Heart right ventricle (tissue), 16 donors: ENCODE measurements at regions of chr4 and their contacts with region 1.

Region 1: DNA sequence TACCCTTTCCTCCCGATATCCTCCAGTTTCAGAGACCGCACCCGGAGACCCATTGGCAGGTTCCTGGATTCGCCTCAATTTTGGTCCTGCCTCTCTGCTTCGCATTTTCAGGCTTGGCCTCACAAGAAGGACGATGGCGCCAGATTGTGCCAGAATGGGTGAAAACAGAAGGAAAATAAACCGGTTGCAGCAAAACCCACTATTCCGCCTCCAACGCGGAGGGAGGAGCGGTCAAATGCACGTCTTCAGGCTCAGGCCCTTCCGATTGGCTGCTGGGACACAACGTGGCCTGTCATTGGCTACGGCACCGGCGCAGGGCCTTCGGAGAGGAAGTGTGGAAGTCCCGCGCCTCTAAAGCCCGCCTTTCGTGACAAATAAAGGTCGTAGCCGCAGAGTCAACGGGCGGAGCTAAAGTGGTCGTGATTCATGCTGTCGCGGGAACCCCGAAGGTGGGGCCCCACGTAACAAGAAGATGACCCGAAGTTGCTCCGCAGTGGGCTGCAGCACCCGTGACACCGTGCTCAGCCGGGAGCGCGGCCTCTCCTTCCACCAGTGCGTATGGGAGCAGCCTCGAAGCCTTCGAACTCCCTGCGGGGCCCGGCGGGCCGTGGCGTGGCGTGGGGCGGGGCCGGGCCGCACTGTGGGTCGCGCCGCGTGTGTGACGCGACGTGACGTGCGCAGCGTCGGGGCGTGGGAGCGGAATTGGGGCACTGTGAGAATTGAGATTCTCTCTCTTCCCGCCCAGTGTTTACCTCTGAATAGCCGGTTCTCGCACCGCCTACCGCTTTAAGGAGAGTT is at the start of gene THAP9:
- DNase-seq: peak; percentile 97 to 99
- ATAC-seq: peak; percentile 97 to 99 (median 98)
- H3K4me3 ChIP-seq: peak within 1 kb of the TSS; percentile 56 to 88 (median 72)
- H3K27ac ChIP-seq: peak within 1 kb of the TSS; percentile 95 to 99 (median 99)
- H3K4me1 ChIP-seq: peaks cover 0 to 51% (median 36%) of the 10 kb centered on the region in 9 donors
- H3K27me3 ChIP-seq: no peaks in the 10 kb centered on the region
- CTCF ChIP-seq: peak in 1 of 9 donors; percentile 5
- total RNA-seq, gene THAP9: 3.5 to 9.1 (median 6.2) TPM

Region 2: DNA sequence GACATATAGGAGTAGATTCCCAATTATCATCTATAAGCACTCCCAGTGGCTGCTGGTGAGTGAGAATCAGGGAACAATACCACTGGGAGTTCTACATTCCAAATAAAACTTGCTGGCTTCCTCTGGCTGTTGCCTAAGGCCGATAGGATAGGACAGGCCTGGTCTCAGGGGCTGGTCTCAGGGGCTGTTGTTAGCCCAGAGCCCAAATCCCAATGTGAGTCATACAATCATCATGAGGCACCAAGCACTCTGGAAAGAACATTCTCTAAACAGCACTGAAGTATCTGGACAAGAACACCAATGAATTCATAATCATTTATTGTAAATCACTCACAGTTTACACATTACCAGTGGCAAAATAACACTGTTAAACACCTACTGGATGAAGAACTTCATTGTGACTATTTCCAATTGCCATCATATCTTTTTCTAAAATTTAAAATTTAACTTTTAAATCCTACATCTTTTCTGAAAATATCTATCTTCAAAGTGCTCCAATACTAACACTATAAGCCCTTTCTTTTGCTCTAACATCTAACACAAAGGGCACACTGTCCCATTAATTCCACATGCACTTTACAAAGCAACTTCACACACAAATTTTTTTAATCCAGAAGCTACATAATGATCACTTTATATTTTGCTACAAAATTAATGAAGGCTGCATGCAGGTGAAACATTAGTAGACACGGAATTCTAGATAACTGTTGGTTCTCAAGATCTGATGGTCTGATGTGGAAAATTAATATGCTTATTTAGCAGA is 271.1 kb before region 1 on chr4:
- intact Hi-C with region 1: no loop called
- DNase-seq: no peak
- ATAC-seq: no peak
- H3K4me3 ChIP-seq: no peak overlapping the region
- H3K27ac ChIP-seq: peak overlapping the region in 2 of 10 donors; percentile 36 to 57
- H3K4me1 ChIP-seq: peaks cover 0 to 50% (median 9%) of the 10 kb centered on the region in 9 donors
- H3K27me3 ChIP-seq: no peaks in the 10 kb centered on the region
- CTCF ChIP-seq: no peak

Region 3: DNA sequence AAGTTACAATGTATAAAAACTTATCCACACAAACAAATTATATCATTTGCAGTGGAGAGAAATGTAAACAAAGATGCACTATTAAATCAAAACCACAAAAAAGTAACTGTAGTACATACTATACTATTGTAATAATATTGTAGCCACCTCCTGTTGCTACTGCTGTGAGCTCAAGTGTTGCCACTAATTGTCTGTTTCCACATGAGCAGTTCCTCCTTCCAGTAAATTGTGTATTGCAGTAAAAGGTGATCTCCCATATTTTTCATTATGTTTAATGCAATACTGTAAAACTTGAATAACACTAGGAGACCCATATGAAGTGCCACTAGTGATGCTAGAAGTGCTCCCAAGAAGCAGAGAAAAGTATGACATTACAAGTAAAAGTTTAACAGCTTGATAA is 98.4 kb after region 1 on chr4:
- intact Hi-C with region 1: no loop called
- DNase-seq: no peak
- ATAC-seq: no peak
- H3K4me3 ChIP-seq: no peak overlapping the region
- H3K27ac ChIP-seq: no peak overlapping the region
- H3K4me1 ChIP-seq: no peaks in the 10 kb centered on the region
- H3K27me3 ChIP-seq: no peaks in the 10 kb centered on the region
- CTCF ChIP-seq: no peak

Region 4: GRCh38 chr4:83012687-83013419 is 112.3 kb after region 1 on chr4:
- intact Hi-C with region 1: loop called in 6 of 10 experiments (anchors 2 to 5 kb)
- DNase-seq: peak; percentile 96 to 98
- ATAC-seq: peak; percentile 98 to 100 (median 98)
- H3K4me3 ChIP-seq: peak overlapping the region; percentile 66 to 98 (median 79)
- H3K27ac ChIP-seq: peak overlapping the region; percentile 57 to 97 (median 78)
- H3K4me1 ChIP-seq: peaks cover 6 to 45% (median 34%) of the 10 kb centered on the region in 9 donors
- H3K27me3 ChIP-seq: no peaks in the 10 kb centered on the region
- CTCF ChIP-seq: peak; percentile 21 to 66 (median 55)

Region 5: DNA sequence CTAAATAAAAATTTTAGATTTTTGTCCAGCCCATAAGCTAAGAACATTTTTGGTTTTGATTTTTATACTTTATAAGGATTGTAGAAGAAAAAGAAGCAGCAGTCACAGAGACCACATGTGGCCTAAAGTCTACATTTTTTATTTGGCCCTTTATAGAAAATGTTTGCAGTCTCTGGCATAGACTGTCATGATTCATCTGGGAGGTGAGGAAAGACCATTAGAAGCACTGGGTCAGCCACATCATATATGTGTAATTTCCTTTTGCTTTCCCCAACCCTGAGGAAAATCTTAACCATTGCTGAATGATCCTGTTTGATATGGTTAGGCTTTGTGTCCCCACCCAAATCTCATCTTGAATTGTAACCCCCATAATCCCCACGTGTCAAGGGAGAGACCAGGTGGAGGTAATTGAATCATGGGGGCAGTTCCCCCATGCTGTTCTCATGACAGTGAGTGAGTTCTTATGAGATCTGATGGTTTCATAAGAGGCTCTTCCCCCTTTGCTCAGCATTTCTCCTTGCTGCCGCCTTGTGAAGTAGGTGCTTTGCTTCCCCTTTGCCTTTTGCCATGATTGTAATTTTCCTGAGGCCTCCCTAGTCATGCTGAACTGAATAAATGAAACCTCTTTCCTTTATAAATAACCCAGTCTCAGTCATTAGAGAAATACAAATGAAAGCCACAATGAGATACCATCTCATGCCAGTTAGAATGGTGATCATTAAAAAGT is 122.4 kb after region 1 on chr4:
- intact Hi-C with region 1: loop called in 1 of 10 experiments (anchors 10 kb)
- DNase-seq: no peak
- ATAC-seq: no peak
- H3K4me3 ChIP-seq: no peak overlapping the region
- H3K27ac ChIP-seq: no peak overlapping the region
- H3K4me1 ChIP-seq: peaks cover 0 to 7% (median 0%) of the 10 kb centered on the region in 9 donors
- H3K27me3 ChIP-seq: no peaks in the 10 kb centered on the region
- CTCF ChIP-seq: no peak

Region 6: DNA sequence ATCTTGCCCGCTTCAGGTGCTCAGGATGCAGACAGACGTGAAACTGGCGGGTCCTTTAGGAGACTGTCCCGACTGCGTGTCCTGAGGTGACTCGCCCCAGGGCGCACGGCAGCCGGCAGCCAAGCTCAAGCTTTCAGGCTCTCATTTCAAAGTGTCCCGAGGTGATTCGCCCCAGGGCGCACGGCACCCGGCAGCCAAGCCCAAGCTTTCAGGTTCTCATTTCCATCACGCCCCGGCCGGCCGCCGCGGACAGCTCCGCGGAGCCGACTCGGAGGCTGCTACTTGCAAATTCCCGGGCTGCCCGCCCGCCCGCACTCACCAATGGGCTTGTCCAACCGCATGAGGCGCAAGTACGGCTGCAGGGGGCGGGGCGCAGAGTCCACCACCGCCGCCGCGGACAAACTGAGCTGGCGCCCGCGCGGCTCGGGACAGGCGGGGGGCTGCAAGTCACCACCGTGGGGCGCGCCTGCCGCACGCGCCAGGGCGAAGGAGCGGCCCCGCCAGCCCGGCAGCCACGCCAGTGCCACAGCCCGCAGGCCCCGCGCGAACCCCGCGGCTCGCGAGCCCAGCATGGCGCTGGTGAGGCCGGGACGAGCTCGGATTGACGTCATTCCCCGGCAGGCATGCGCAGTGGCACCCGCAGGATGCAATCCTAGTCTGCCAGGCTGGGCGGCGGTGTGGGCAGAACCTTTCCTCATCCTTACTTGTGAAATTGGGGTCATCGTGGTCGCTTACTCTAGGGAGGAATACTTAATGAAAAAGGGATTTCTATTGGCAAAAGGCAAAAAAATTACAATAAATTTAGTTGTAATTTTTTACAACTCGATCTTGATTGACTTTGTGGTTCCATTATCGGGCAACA is 383.9 kb after region 1 on chr4 and contains the start of gene COQ2:
- intact Hi-C with region 1: loop called in 1 of 10 experiments (anchors 5 kb)
- DNase-seq: peak; percentile 96 to 97
- ATAC-seq: peak; percentile 96 to 99 (median 98)
- H3K4me3 ChIP-seq: peak within 1 kb of the TSS; percentile 45 to 81 (median 67)
- H3K27ac ChIP-seq: peak within 1 kb of the TSS; percentile 91 to 99 (median 96)
- H3K4me1 ChIP-seq: peaks cover 0 to 36% (median 10%) of the 10 kb centered on the region in 9 donors
- H3K27me3 ChIP-seq: no peaks in the 10 kb centered on the region
- CTCF ChIP-seq: peak; percentile 14 to 65 (median 36)
- total RNA-seq, gene COQ2: 17.8 to 32.8 (median 26.5) TPM